ENCODE measurements at regions of chr6 and their contacts with region 1.

Region 1: DNA sequence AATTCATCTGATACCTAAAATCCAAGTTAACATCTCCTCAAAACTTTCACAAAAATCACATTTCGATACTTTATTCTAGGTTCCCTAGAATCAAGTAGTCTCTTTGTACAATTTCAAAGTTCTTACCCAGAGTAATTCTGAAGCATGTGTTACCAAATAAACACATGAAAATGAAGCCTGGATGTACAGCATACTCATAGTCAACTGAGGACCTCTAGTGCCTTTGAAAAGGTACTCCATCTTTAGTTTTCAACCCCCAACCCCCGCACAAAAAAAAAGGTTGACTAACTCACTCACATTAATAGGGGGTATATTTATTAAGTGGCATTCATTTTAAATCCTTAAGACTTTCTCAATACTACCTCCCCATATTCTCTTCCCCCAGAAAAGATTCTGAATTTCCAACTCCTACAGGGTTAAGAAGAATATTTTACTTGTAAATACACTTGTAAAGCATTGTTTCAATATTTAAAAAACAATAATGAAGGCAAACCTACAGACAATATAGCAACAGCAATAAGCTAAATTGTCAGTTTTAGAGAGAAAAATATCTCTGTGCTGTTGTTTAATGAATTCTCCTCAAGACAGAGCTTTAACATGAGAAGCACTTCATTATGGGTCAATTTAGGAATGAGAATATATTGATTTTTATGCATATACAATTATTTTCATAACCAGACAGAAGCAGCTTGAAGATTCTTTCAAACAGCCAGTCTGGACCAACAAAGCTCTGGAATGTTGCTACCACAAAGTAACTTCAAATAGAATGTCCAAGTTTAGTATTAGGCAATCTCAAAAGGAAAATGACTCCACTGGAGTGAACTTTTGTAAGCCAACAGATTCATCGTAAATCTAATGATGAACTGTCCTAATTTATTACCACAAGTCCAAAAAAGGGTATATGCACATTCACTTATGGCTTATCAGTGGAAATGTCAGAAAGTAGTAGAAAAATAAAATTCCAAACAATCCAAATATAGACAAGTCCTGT is 3.3 kb downstream of the PLN start:
- DNase-seq: peak; percentile 12
- H3K4me3 Mint-ChIP-seq: no peak overlapping the region
- H3K27ac Mint-ChIP-seq: no peak overlapping the region
- H3K4me1 Mint-ChIP-seq: peaks cover 39% of the 10 kb centered on the region
- H3K27me3 Mint-ChIP-seq: no peaks in the 10 kb centered on the region

Region 2: GRCh38 chr6:118187568-118188164 is 363.7 kb before region 1 on chr6:
- CTCF ChIA-PET with region 1: no interaction called
- intact Hi-C with region 1: loop called (anchors 5 kb)
- DNase-seq: peak; percentile 53
- H3K4me3 Mint-ChIP-seq: peak overlapping the region; percentile 5
- H3K27ac Mint-ChIP-seq: peak overlapping the region; percentile 82
- H3K4me1 Mint-ChIP-seq: peaks cover 32% of the 10 kb centered on the region
- H3K27me3 Mint-ChIP-seq: no peaks in the 10 kb centered on the region

Region 3: GRCh38 chr6:118419448-118420394 is 131.6 kb before region 1 on chr6:
- CTCF ChIA-PET with region 1: no interaction called
- intact Hi-C with region 1: no loop called
- DNase-seq: no peak
- H3K4me3 Mint-ChIP-seq: no peak overlapping the region
- H3K27ac Mint-ChIP-seq: no peak overlapping the region
- H3K4me1 Mint-ChIP-seq: no peaks in the 10 kb centered on the region
- H3K27me3 Mint-ChIP-seq: no peaks in the 10 kb centered on the region

Region 4: DNA sequence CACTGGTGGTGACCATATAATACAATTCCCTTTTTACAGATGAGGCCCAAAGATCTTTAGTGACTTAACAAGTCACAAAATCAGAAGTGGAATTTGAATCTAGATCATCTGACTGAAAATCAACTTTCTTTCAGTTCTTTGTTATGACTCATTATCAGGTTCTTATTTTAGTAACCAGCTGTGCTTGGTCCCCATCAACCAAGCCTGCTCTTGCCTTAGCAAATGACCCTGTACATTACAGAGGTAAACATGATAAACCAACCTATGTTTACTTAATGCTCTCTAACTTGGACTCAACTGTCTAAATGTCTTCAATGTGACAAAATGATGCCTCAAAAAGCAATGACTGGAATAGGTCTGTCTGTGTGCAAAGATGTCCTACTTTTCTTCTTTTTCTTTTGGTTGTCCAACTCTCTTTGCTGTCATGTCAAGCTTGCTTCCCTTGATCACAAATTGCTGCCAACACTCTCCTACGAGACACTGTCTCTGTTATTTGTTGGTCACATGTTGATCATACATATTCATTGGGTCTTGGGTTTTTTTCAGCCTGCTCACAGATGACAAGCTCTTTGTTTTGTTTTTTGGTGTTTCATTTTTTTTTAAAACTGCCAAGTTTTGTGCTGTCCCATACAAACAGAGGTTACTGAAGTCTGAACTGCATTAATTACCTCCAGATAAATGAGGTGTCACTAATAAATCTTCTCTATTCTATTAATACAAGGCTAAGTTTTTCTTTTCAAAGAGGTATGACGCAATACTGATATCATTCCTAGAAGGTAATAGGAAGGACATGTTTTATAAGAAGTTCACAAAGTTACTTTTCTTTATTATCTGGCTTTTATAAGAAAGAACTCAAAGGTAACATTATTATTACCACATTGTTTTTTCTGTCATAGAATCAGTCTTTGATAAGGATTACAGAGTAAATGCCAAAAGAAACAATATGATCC is 65.5 kb before region 1 on chr6:
- CTCF ChIA-PET with region 1: no interaction called
- intact Hi-C with region 1: loop called (anchors 1 kb)
- DNase-seq: peak; percentile 13
- H3K4me3 Mint-ChIP-seq: no peak overlapping the region
- H3K27ac Mint-ChIP-seq: no peak overlapping the region
- H3K4me1 Mint-ChIP-seq: peaks cover 27% of the 10 kb centered on the region
- H3K27me3 Mint-ChIP-seq: no peaks in the 10 kb centered on the region

Region 5: DNA sequence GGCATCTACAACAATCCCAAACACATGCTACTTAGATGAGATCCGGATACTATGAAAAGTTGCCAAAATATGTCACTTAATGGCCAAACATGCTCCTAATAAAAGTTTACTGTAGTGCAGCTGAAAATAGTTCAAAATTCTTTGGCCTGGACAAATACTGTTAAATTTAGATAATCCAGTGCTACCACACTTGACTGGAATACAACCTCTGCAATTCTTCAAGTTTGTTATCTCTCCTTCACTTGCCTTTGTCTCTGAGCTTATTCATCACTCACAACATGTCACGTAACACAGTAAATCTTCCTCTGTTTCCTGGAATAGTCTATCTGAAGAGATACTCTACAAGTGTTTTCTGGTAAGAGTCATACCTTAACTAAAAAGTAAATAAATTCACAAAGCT is 13.8 kb before region 1 on chr6:
- CTCF ChIA-PET with region 1: interaction called, 4 read pairs
- intact Hi-C with region 1: loop called (anchors 1 kb)
- DNase-seq: no peak
- H3K4me3 Mint-ChIP-seq: no peak overlapping the region
- H3K27ac Mint-ChIP-seq: no peak overlapping the region
- H3K4me1 Mint-ChIP-seq: peaks cover 33% of the 10 kb centered on the region
- H3K27me3 Mint-ChIP-seq: no peaks in the 10 kb centered on the region